H1 (cell line): ENCODE measurements at regions of chr1 and their contacts with region 1.

Region 1: DNA sequence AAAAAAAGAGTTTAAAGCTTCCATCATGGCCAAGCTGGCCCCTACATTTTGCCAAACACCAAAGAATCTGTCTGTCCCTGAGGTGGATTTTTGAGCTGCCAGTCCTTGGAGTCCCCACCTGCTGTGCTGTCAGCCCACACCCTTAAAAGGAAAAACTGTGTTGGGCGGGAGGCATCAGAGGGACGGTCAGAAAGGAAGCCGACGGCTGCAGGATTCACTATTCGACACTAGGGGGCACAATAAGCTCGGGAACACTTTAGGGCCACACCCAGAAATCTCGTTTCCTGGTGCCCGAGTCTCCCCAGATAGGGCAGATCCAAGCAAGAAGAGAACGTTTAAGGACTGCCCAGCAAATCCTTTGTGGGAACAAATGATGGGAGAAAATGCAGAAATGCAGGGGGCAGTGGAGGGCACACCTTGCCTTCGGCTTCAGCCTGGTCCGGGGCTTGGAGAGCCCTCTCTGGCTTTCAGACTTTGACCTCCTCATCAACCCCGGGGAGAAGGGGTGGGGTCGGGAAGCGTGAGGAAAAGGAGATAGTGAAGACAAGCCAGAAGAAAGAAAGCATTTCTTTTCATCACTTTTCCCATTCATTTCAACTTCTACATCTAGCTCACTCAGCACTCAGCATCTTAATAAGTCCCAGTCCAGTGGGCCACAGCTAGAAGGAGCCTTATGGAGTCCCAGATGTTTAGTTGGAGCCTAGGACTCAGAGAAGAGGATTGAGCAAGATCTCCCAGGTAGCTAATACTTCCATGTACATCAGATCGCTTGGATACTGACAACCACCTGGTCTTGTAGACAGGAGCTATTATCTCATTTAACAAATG is 5.0 kb upstream of the CTTNBP2NL start:
- DNase-seq: peak; percentile 85 to 93
- H3K4me3 ChIP-seq: peak overlapping the region in 3 of 4 experiments; percentile 8 to 54 (median 15); a peak in 4 of 8 replicates
- H3K27ac ChIP-seq: no peak overlapping the region
- H3K4me1 ChIP-seq: peaks cover 2 to 14% (median 8%) of the 10 kb centered on the region in 4 experiments; a peak in 5 of 7 replicates
- H3K27me3 ChIP-seq: no peaks in the 10 kb centered on the region
- CTCF ChIP-seq: peak; percentile 72 to 97 (median 78)
- EP300 ChIP-seq: no peak
- POLR2A ChIP-seq: no peak
- RAD21 ChIP-seq: peak; percentile 92 to 94

Region 2: DNA sequence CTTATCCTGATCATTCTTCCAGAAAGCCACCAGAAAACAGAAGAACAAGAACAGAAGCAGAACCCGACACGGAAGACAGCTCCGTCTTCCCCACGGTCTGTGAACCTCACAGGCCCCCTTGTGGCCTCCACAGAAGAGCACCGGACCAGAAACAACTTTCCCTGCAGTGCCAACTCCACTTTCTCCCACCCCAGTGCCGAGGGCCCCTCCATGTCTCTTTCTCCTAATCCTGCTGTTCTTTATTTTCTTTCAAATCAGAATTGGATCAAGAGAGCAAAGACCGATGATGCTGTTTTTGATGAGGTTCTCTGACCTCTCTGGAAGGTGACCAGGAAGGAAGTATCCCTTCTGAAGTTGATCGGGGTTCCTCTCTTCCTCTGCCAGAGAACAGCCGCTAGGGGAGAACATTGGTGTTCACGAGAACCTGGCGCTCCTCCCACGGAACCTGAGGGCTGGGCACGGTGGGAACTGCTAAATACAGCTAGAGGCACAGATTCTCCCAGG is 53.9 kb before region 1 on chr1:
- CTCF ChIA-PET with region 1: no interaction called
- POLR2A ChIA-PET with region 1: no interaction called
- DNase-seq: no peak
- H3K4me3 ChIP-seq: no peak overlapping the region
- H3K27ac ChIP-seq: no peak overlapping the region
- H3K4me1 ChIP-seq: no peaks in the 10 kb centered on the region
- H3K27me3 ChIP-seq: no peaks in the 10 kb centered on the region
- CTCF ChIP-seq: peak; percentile 73 to 79 (median 74)
- EP300 ChIP-seq: no peak
- POLR2A ChIP-seq: no peak
- RAD21 ChIP-seq: peak; percentile 76 to 85

Region 3: GRCh38 chr1:112369392-112370285 is 21.4 kb before region 1 on chr1:
- CTCF ChIA-PET with region 1: interaction called, 10 read pairs
- POLR2A ChIA-PET with region 1: no interaction called
- DNase-seq: peak; percentile 78 to 98
- H3K4me3 ChIP-seq: no peak overlapping the region
- H3K27ac ChIP-seq: no peak overlapping the region
- H3K4me1 ChIP-seq: no peaks in the 10 kb centered on the region
- H3K27me3 ChIP-seq: no peaks in the 10 kb centered on the region
- CTCF ChIP-seq: peak; percentile 99 to 100 (median 99)
- EP300 ChIP-seq: no peak
- POLR2A ChIP-seq: no peak
- RAD21 ChIP-seq: peak; percentile 94 to 98

Region 4: DNA sequence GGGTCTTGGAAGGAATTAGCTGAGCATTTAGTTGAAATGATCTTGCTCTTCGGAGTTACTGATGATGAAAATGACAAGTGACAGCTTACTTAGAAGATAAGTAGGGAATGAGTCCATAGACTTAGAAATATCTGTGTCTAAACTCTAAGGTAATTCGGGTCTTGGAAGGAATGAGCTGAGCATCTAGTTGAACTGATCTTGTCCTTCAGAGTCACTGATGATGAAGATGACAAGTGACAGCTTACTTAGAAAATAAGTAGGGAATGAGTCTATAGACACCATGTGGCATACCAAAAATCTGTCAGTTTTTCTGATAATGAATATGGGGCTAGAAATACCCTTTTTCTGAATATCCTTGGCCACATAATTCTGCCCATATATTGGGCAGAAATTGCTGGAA is 19.7 kb after region 1 on chr1:
- CTCF ChIA-PET with region 1: interaction called, 16 read pairs
- POLR2A ChIA-PET with region 1: interaction called, 12 read pairs
- DNase-seq: no peak
- H3K4me3 ChIP-seq: no peak overlapping the region
- H3K27ac ChIP-seq: no peak overlapping the region
- H3K4me1 ChIP-seq: no peaks in the 10 kb centered on the region
- H3K27me3 ChIP-seq: no peaks in the 10 kb centered on the region
- CTCF ChIP-seq: no peak
- EP300 ChIP-seq: no peak
- POLR2A ChIP-seq: no peak
- RAD21 ChIP-seq: no peak

Region 5: DNA sequence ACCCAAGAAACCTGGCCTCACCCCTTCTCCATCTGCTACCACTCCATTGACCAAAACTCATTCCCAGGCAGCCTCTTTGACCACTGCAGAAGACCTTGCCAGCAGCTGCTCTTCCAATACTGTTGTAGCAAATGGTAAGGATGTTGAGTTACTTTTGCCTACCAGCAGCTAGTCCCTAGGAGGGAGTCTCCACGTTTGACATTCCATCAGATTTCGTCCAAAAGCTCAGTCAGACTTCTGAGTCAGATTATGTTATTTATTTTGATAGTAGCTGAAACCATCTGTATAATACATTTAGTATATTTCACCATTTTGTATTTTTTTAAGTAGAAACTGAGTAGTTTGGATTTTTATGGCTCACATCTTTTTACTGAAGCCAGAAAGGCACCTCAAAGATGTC is 66.3 kb after region 1 on chr1:
- CTCF ChIA-PET with region 1: interaction called, 80 read pairs
- POLR2A ChIA-PET with region 1: interaction called, 4 read pairs
- DNase-seq: no peak
- H3K4me3 ChIP-seq: no peak overlapping the region
- H3K27ac ChIP-seq: no peak overlapping the region
- H3K4me1 ChIP-seq: peaks cover 0 to 2% (median 0%) of the 10 kb centered on the region in 4 experiments; a peak in 3 of 7 replicates
- H3K27me3 ChIP-seq: no peaks in the 10 kb centered on the region
- CTCF ChIP-seq: no peak
- EP300 ChIP-seq: no peak
- POLR2A ChIP-seq: no peak
- RAD21 ChIP-seq: no peak

Region 6: GRCh38 chr1:112501810-112502641 is 111.0 kb after region 1 on chr1:
- CTCF ChIA-PET with region 1: interaction called, 20 read pairs
- POLR2A ChIA-PET with region 1: no interaction called
- DNase-seq: peak in 1 of 2 experiments; percentile 74
- H3K4me3 ChIP-seq: peak overlapping the region; percentile 11 to 60 (median 50)
- H3K27ac ChIP-seq: no peak overlapping the region
- H3K4me1 ChIP-seq: peaks cover 0 to 7% (median 6%) of the 10 kb centered on the region in 4 experiments; a peak in 5 of 7 replicates
- H3K27me3 ChIP-seq: peaks cover 17 to 60% (median 51%) of the 10 kb centered on the region in 4 experiments
- CTCF ChIP-seq: peak in 2 of 3 experiments; percentile 38 to 49; a peak in 2 of 4 replicates
- EP300 ChIP-seq: no peak
- POLR2A ChIP-seq: no peak
- RAD21 ChIP-seq: peak; percentile 29 to 46

Region 7: DNA sequence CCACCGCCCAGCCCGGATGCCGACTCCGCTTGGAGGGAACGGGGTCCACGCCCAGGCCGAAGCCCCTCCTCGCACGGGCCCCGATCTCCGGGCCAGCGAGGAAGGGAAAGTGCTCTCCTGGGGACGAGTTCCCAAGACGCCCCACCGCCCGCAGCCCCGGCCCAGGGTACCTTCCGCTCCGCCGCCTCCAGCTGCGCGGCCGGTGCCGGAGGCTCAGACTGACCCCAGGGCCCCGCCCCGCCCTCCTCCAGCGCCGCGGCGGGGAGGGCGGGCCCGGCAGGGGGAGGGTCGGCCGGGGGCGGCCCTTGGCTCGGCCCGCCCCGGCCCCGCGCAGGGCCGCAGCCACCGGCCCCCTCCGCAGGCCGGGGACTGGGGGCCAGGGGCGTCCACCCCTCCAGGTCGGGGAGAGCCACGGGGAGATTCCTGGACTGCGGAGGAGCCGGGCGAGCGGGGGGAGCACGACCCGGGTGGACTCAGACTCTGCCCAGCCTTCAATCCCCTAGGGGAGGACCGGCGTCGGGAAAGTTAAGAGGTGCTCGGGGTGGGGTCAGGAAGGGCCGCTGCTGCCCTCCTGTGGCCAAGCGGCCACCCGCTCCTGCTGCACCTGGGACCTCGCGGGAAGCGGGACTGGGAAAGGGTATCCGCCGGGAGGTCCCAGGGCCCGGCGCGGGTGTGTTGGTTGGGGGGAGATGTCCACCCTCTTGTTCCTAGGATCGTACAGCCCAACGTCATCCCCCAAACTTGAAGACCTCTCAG is 316.1 kb after region 1 on chr1 and contains the start of gene RHOC:
- CTCF ChIA-PET with region 1: interaction called, 10 read pairs
- POLR2A ChIA-PET with region 1: interaction called, 3 read pairs
- DNase-seq: peak; percentile 74 to 94
- H3K4me3 ChIP-seq: peak within 1 kb of the TSS; percentile 39 to 78 (median 66)
- H3K27ac ChIP-seq: no peak within 1 kb of the TSS
- H3K4me1 ChIP-seq: peaks cover 10 to 37% (median 20%) of the 10 kb centered on the region in 4 experiments
- H3K27me3 ChIP-seq: peaks cover 0 to 10% (median 4%) of the 10 kb centered on the region in 4 experiments; a peak in 2 of 7 replicates
- CTCF ChIP-seq: peak in 2 of 3 experiments; percentile 90 to 92; a peak in 3 of 4 replicates
- EP300 ChIP-seq: peak in 1 of 2 experiments; percentile 45; a peak in 1 of 3 replicates
- POLR2A ChIP-seq: peak in 1 of 2 experiments; percentile 42; a peak in 1 of 3 replicates
- RAD21 ChIP-seq: peak; percentile 87 to 91
- total RNA-seq, gene RHOC: 53.6 and 57.6 TPM in 2 replicates